ENCODE measurements at regions of chr5 and their contacts with region 1.

Region 1: DNA sequence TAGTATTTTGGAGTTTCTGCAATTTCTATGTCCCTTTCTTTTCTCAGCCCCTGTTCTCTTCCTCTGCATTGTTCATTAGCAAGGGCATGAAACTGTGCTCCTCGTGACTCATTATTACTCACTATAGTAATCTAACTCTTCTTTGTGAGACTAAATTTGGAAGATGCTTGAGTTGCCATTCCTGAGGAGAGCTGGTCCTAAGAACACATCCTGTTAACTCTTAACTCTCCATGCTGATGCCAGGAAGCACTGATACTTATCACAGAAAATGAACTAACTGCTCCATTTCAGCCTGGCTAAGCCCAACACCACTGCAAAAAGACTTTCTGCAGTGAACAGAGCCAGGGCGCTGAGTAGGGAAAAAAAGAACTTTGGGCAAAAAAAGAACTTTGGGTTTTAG is 10.6 kb upstream of the CSNK1A1 start:
- DNase-seq: no peak
- H3K4me3 ChIP-seq: no peak overlapping the region
- H3K27ac ChIP-seq: peak overlapping the region; percentile 56 to 64 (median 62)
- H3K4me1 ChIP-seq: peaks cover 9 to 19% of the 10 kb centered on the region in 2 donors
- H3K27me3 ChIP-seq: no peaks in the 10 kb centered on the region
- CTCF ChIP-seq: no peak
- POLR2A ChIP-seq: no peak

Region 2: DNA sequence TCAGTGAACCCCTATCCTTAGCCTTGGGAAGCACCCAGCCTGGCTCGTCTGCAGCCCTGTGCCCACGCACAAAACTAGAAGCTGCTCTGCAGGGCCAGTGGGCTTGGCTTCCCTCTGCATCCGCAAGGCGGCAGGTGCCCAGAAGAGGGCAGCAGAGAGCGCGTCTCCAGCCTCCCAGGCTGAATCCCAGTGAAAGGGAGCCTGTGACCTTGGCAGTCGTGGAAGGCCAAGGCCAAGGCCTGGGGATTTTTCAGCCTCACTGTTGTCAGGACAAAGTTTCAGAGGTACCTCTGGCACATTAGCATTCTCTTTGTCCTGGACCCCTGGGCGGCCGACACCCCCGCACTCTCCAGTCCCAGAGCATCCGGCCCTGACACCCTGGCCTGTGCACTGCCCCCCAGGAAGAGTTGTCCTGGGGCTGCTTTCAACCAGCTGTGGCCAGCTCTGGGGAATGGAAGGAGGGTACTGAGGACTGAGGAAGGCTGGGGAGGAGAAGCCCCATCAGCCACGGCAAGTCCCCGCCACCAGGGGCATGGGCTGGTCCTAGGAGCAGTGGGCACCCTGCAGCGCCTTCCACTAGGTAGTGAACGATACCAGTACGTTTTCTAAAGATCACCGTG is 119.2 kb before region 1 on chr5:
- intact Hi-C with region 1: loop called (anchors 5 kb)
- DNase-seq: peak; percentile 76 to 82
- H3K4me3 ChIP-seq: no peak overlapping the region
- H3K27ac ChIP-seq: no peak overlapping the region
- H3K4me1 ChIP-seq: peaks cover 0 to 16% of the 10 kb centered on the region in 2 donors
- H3K27me3 ChIP-seq: no peaks in the 10 kb centered on the region
- CTCF ChIP-seq: peak; percentile 82 to 94 (median 92)
- POLR2A ChIP-seq: no peak

Region 3: DNA sequence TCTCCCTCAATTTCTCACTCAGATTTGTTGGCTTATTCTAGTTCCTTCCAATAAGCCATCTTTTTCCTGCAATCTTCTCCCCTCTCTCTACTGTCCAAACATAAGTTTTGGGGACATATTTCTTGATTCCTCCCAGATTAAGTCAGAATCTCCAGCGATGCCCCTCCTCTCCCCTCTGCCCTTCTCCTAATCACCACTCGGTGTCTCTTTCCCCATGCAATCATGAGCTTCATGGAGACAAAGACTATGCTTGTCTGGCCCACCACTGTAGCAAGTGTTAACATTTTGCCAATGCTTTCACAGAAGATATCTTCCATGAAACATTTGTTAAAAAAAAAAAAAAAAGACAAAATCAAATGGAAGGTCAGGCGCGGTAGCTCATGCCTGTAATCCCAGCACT is 340.3 kb after region 1 on chr5:
- intact Hi-C with region 1: no loop called
- DNase-seq: no peak
- H3K4me3 ChIP-seq: no peak overlapping the region
- H3K27ac ChIP-seq: no peak overlapping the region
- H3K4me1 ChIP-seq: no peaks in the 10 kb centered on the region
- H3K27me3 ChIP-seq: no peaks in the 10 kb centered on the region
- CTCF ChIP-seq: no peak
- POLR2A ChIP-seq: no peak

Measured in thyroid gland (tissue), 4 donors.